Activated B cell treated with CpG ODN at 0.5 μM for 24 hours (primary cell): ENCODE measurements at regions of chr6 and their contacts with region 1.

Region 1: DNA sequence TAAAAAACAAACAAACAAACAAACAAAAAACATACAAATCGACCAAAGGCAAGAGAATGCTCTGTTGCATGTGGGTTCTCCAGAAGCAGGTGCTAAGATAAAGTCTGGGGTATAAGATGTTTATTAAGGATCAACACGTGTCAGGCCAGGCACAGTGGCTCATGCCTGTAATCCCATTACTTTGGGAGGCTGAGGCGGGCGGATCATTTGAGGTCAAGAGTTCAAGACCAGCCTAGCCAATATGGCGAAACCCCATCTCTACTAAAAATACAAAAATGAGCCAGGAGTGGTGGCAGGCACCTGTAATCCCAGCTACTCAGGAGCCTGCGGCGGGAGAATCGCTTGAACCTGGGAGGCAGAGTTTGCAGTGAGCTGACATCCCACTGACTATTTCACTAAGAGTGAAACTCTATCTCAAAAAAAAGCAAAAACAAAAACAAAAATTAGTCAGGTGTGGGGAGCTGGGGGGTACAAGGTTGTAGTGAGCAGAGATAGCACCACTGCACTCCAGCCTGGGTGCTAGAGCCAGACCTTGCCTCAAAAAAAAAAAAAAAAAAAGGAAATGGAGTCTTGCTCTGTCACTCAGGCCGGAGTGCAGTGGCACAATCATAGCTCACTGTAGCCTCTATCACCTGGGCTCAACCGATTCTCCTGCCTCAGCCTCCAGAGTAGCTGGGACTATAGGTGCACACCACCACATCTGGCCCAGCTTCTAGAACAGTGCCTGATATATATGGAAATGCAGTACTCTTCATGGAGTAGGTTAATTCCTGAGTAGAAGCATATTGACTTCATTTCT is 86.8 kb upstream of the JARID2 start:
- DNase-seq: no peak
- ATAC-seq: no peak
- H3K4me3 Mint-ChIP-seq: no peak overlapping the region
- H3K27ac Mint-ChIP-seq: no peak overlapping the region
- H3K4me1 Mint-ChIP-seq: no peaks in the 10 kb centered on the region
- H3K27me3 Mint-ChIP-seq: no peaks in the 10 kb centered on the region
- CTCF ChIP-seq: no peak

Region 2: DNA sequence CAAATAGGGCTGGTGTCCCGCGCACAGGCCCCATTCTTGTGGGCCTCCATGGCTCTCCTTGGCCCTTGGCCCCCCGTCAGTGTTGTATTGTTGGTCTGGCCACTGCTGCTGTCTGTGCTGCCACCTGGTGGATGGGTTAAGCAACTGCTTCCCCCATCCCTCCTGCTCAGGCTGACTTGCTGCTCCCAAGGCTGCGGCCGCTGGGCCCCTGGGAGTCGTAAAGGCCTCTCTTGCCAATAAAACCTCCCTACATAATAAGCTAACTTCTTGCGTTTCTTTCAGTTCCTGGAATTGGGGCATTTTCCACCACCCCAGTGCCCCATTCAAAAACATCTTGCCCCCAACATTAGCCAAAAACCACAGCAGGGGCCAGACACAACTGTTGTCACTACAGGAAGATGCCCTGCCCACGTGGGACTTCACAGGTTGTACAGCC is 1014.3 kb before region 1 on chr6:
- CTCF ChIA-PET with region 1: no interaction called
- POLR2A ChIA-PET with region 1: interaction called, 11 read pairs
- intact Hi-C with region 1: no loop called
- DNase-seq: peak; percentile 63
- ATAC-seq: peak; percentile 84
- H3K4me3 Mint-ChIP-seq: peak overlapping the region; percentile 20
- H3K27ac Mint-ChIP-seq: peak overlapping the region; percentile 62
- H3K4me1 Mint-ChIP-seq: peaks cover 42% of the 10 kb centered on the region
- H3K27me3 Mint-ChIP-seq: no peaks in the 10 kb centered on the region
- CTCF ChIP-seq: peak; percentile 57

Region 3: GRCh38 chr6:15001326-15001910 is 157.6 kb before region 1 on chr6:
- CTCF ChIA-PET with region 1: no interaction called
- POLR2A ChIA-PET with region 1: no interaction called
- intact Hi-C with region 1: no loop called
- DNase-seq: no peak
- ATAC-seq: no peak
- H3K4me3 Mint-ChIP-seq: no peak overlapping the region
- H3K27ac Mint-ChIP-seq: no peak overlapping the region
- H3K4me1 Mint-ChIP-seq: no peaks in the 10 kb centered on the region
- H3K27me3 Mint-ChIP-seq: no peaks in the 10 kb centered on the region
- CTCF ChIP-seq: no peak

Region 4: GRCh38 chr6:15132854-15133670 is 26.0 kb before region 1 on chr6:
- CTCF ChIA-PET with region 1: no interaction called
- POLR2A ChIA-PET with region 1: no interaction called
- intact Hi-C with region 1: no loop called
- DNase-seq: no peak
- ATAC-seq: no peak
- H3K4me3 Mint-ChIP-seq: no peak overlapping the region
- H3K27ac Mint-ChIP-seq: no peak overlapping the region
- H3K4me1 Mint-ChIP-seq: peaks cover 13% of the 10 kb centered on the region
- H3K27me3 Mint-ChIP-seq: no peaks in the 10 kb centered on the region
- CTCF ChIP-seq: no peak

Region 5: DNA sequence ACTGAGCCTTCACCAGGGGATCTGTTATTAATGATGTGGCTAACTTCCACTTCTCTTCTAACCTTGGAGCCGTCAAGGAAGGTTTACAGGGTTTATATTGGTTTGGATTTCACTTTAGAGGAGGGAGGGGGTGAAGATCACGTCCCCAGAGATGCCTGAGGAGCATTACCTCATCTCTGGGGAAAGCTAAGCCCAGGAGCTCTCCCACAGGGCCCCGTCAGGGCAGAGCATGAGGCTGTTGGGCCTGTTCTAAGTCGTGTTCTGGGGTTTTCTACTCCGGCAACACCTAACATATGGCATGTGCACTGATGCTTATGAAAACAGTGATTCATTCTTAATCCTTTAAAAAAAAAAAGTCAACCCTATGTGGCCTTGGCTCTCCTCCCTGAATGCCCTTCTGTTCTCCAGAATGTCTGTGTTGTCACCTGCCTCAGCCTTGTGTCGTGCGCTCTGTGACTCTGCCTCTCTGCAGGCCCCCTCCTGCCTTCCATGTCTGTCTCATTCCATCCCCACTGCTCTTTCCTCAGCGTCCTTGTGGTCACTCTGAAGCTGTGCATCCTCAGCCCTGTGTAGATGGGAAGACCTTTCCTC is 10.6 kb before region 1 on chr6:
- CTCF ChIA-PET with region 1: no interaction called
- POLR2A ChIA-PET with region 1: no interaction called
- intact Hi-C with region 1: no loop called
- DNase-seq: no peak
- ATAC-seq: peak; percentile 62
- H3K4me3 Mint-ChIP-seq: no peak overlapping the region
- H3K27ac Mint-ChIP-seq: peak overlapping the region; percentile 38
- H3K4me1 Mint-ChIP-seq: peaks cover 41% of the 10 kb centered on the region
- H3K27me3 Mint-ChIP-seq: no peaks in the 10 kb centered on the region
- CTCF ChIP-seq: no peak

Region 6: GRCh38 chr6:15207923-15208322 is 48.9 kb after region 1 on chr6:
- CTCF ChIA-PET with region 1: no interaction called
- POLR2A ChIA-PET with region 1: no interaction called
- intact Hi-C with region 1: no loop called
- DNase-seq: no peak
- ATAC-seq: no peak
- H3K4me3 Mint-ChIP-seq: no peak overlapping the region
- H3K27ac Mint-ChIP-seq: no peak overlapping the region
- H3K4me1 Mint-ChIP-seq: no peaks in the 10 kb centered on the region
- H3K27me3 Mint-ChIP-seq: no peaks in the 10 kb centered on the region
- CTCF ChIP-seq: no peak